GM10248 (cell line): ENCODE measurements at regions of chr5 and their contacts with region 1.

Region 1: DNA sequence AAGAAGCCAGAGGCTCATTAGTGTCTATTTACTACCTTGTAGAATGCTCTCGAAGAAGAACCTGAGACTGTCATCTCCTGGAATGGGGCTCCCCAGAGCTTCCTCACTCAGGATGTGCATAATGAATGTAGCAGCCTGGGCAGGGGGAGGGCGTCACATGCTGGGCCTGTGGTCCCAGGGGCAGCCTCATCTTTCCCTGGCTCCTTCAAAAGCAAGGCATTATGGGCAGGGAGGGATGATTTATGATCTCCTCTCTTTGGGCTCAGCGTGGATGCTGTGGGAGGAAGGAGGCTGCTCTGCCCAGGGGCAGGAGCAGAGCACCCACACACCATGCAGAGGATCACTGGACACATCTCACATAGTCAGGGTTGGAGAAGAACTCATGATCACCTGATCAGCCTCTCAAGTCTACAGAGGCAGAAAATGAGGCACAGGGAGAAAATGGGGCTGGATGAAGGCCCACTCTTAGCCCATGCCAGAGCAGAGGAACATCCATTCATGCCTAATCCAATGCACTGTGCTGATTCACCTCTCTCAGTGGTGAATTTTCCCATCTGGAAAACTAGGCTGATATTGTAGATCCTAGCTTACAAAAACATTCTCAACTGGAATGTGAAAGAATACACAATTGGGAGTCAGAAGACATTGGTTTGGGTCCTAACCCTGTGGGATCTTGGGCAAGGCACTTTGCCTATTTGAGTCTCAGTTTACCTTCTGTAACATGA is 173.7 kb downstream of the CARTPT start:
- DNase-seq: no peak
- CTCF ChIP-seq: no peak

Region 2: DNA sequence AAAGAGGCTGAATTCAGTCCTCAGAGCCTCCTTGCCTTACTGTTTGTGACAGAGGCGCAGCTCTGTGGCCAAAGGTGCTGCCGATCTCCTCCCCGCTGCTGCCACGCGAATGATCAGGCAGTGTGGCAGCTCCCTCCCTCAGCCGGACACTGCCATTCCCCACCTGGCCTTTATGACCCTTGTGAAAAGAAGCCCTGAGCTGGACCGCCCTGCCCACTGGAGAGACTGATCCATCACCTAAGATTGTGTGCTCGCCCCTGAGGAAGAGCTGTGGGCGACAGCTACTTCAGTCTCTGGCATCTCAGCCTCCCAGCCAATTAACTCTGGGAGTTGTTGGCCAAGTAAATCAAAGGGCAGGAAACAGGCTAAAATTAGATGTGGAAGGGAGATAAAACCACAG is 82.8 kb before region 1 on chr5:
- CTCF ChIA-PET with region 1: no interaction called
- POLR2A ChIA-PET with region 1: no interaction called
- DNase-seq: no peak
- CTCF ChIP-seq: no peak

Region 3: DNA sequence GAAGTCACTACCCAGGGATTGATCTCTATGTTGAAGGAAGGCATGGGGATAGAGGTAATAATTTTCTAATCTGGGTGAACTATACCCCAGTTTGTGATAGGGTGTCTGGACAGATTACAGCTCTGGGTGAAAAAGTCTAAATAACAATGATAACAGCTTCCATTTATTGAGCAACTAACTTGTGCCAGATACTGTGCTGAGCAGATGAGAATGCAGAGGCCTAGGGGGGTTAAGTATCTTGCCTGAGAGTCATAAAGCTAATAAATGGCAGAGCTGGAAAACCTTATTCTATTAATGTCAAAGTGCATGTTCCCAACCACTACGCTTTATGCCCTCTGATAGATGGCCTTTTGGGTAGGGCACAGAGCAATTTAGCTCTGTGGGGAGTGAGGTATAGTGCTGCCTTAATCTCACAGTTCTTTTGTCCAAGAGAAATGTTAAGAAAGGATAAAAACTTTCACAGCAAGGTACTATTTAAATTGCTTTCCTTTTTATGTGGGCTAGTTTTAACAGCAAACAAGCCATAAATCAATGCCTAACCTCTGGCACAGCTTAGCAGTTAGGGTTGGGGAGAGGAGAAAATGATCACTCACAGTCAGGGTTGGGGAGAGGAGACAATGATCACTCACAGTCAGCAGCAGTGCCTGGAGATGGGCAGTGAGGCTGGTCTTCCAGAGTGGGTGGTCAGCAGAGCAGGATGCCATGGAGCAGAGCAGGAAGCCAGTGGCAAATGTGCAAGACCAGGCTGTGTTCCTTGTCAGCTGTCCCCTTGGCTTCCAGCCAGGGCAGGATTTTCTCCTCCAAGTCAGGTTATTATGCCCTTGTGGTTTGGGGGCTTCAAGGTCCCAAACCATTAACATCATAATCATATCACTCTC is 13.3 kb after region 1 on chr5:
- CTCF ChIA-PET with region 1: interaction called, 10 read pairs
- POLR2A ChIA-PET with region 1: no interaction called
- DNase-seq: no peak
- CTCF ChIP-seq: no peak